HepG2 (cell line): ENCODE measurements at regions of chr19 and their contacts with region 1.

Region 1: DNA sequence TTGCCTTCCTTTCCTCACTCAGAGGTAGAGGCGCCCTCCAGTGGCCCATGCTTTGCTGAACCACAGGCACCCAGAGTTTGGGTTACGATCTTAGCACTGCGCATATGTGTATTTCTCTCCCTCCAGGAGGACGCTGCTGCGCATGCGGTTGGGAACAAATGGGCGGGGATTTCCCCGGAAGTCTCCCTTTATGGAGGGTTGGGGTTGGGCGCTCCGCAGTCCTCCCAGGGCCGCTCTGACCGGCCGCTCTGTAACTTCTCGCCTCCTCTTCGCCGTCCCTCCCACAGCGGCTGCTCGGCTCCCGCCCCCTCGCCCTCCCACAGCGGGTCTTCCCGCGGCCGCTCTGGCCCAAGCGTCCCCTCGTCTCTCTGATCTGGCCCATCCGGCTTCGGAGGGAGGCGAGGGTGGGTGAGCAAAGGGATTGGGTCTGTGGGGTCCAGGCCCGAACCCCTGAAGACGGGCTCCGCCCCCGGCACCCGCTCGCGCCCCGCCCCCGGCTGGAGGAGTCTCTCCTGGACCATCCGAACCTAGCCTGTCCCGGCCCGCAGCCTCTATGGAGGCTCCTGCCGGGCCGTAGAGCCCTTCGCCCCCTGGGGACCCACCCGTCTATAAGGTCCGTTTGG is at the start of gene MEGF8:
- DNase-seq: peak; percentile 97
- ATAC-seq: peak; percentile 95
- H3K4me3 ChIP-seq: peak within 1 kb of the TSS; percentile 89 to 92 (median 92)
- H3K27ac ChIP-seq: peak within 1 kb of the TSS; percentile 63
- H3K4me1 ChIP-seq: peaks cover 24% of the 10 kb centered on the region
- H3K27me3 ChIP-seq: peaks cover 0 to 6% of the 10 kb centered on the region in 2 experiments; a peak in 1 of 5 replicates
- CTCF ChIP-seq: peak; percentile 94
- EP300 ChIP-seq: peak; percentile 12 to 25; a peak in 1 of 4 replicates
- POLR2A ChIP-seq: peak; percentile 43 to 73; a peak in 3 of 4 replicates
- RAD21 ChIP-seq: peak; percentile 4; the same call in 1 of the 2 replicates
- total RNA-seq, gene MEGF8: 3.9 and 8.8 TPM in 2 replicates

Region 2: DNA sequence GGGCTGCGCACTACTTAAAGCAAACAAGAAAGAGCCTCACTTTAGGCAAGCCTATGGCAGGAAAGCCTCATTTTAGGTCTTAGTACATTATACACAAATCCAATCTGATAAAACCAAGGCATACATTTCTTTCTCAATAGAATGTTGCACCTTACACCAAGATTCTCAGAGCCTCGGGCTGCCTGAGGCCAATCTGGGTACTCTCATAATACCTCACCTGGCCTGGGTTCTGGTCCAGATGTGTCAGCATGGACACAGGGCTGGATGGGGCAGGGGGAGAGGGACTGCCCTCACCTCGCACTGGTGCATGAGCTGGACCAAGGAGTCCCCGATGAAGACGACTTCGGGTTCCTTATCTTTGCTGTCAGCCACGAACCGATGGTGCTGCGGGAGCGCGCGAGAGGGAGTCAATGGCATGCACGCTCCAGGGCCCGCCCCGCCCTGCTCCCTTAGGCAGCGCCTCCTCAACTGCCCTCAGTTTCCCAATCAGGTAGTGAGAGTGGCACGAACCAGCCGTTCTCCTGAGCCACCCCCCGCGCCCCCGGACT is 23.7 kb before region 1 on chr19 and contains the start of gene PRR19:
- CTCF ChIA-PET with region 1: no interaction called
- POLR2A ChIA-PET with region 1: no interaction called
- in situ Hi-C with region 1: no loop called
- intact Hi-C with region 1: loop called (anchors 2 kb)
- DNase-seq: no peak
- ATAC-seq: peak; percentile 40
- H3K4me3 ChIP-seq: peak within 1 kb of the TSS; percentile 58 to 81 (median 77)
- H3K27ac ChIP-seq: peak within 1 kb of the TSS; percentile 43
- H3K4me1 ChIP-seq: peaks cover 28% of the 10 kb centered on the region
- H3K27me3 ChIP-seq: no peaks in the 10 kb centered on the region
- CTCF ChIP-seq: no peak
- EP300 ChIP-seq: no peak
- POLR2A ChIP-seq: no peak
- RAD21 ChIP-seq: no peak
- total RNA-seq, gene PRR19: 0.33 and 0.38 TPM in 2 replicates

Region 3: GRCh38 chr19:42352301-42353259 is 27.2 kb after region 1 on chr19:
- CTCF ChIA-PET with region 1: no interaction called
- POLR2A ChIA-PET with region 1: no interaction called
- in situ Hi-C with region 1: no loop called
- intact Hi-C with region 1: no loop called
- DNase-seq: no peak
- ATAC-seq: no peak
- H3K4me3 ChIP-seq: no peak overlapping the region
- H3K27ac ChIP-seq: no peak overlapping the region
- H3K4me1 ChIP-seq: no peaks in the 10 kb centered on the region
- H3K27me3 ChIP-seq: no peaks in the 10 kb centered on the region
- CTCF ChIP-seq: no peak
- EP300 ChIP-seq: no peak
- POLR2A ChIP-seq: no peak
- RAD21 ChIP-seq: no peak